GM12878 (cell line): ENCODE measurements at regions of chr9 and their contacts with region 1.

Region 1: GRCh38 chr9:2181792-2182191 is 166.6 kb downstream of the SMARCA2 start:
- DNase-seq: no peak
- ATAC-seq: peak; percentile 51
- H3K4me3 ChIP-seq: no peak overlapping the region
- H3K27ac ChIP-seq: no peak overlapping the region
- H3K4me1 ChIP-seq: no peaks in the 10 kb centered on the region
- H3K27me3 ChIP-seq: no peaks in the 10 kb centered on the region
- CTCF ChIP-seq: peak; percentile 45 to 49 (median 48); a peak in 5 of 6 replicates
- EP300 ChIP-seq: no peak
- POLR2A ChIP-seq: no peak
- RAD21 ChIP-seq: peak; percentile 48

Region 2: GRCh38 chr9:1882711-1883403 is 298.9 kb before region 1 on chr9:
- CTCF ChIA-PET with region 1: no interaction called
- POLR2A ChIA-PET with region 1: no interaction called
- RAD21 ChIA-PET with region 1: no interaction called
- SMC1A ChIA-PET with region 1: no interaction called
- in situ Hi-C with region 1: no loop called
- intact Hi-C with region 1: no loop called
- DNase-seq: no peak
- ATAC-seq: no peak
- H3K4me3 ChIP-seq: no peak overlapping the region
- H3K27ac ChIP-seq: no peak overlapping the region
- H3K4me1 ChIP-seq: peaks cover 27% of the 10 kb centered on the region
- H3K27me3 ChIP-seq: no peaks in the 10 kb centered on the region
- CTCF ChIP-seq: no peak
- EP300 ChIP-seq: no peak
- POLR2A ChIP-seq: no peak
- RAD21 ChIP-seq: no peak

Region 3: DNA sequence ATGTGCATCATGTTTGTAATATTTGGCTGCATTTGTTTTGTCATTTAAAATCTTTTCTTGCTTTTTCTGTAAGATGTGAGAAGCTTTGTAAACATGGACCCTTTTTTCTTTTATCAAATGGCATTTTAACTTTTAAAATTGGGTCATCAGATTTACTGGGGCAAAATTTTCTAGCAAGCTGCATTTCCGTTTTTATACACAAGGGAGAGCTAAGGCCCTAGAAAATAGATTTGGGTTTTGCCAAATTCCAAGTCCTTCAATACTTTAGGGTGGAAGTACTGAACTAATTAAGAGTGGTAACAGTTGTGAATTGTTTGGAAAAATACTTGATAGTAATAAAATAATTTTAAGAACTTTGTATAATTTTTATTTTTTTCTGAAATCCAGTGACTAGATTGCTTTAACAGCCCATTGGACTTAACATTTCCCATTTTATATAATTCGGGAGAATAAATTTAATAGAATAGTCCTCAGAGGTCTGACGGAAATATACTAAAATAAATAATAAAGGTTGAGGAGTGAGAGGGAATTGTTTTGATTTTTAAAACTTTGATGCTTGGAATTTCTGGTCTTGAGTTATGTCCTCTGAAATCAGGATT is 49.2 kb before region 1 on chr9:
- CTCF ChIA-PET with region 1: interaction called, 61 read pairs
- POLR2A ChIA-PET with region 1: no interaction called
- RAD21 ChIA-PET with region 1: interaction called, 23 read pairs
- SMC1A ChIA-PET with region 1: interaction called, 13 read pairs
- in situ Hi-C with region 1: no loop called
- intact Hi-C with region 1: loop called (anchors 2 kb)
- DNase-seq: no peak
- ATAC-seq: peak; percentile 25; the same call in 1 of the 3 replicates
- H3K4me3 ChIP-seq: no peak overlapping the region
- H3K27ac ChIP-seq: no peak overlapping the region
- H3K4me1 ChIP-seq: no peaks in the 10 kb centered on the region
- H3K27me3 ChIP-seq: no peaks in the 10 kb centered on the region
- CTCF ChIP-seq: peak; percentile 51 to 58 (median 53)
- EP300 ChIP-seq: no peak
- POLR2A ChIP-seq: no peak
- RAD21 ChIP-seq: peak; percentile 69

Region 4: DNA sequence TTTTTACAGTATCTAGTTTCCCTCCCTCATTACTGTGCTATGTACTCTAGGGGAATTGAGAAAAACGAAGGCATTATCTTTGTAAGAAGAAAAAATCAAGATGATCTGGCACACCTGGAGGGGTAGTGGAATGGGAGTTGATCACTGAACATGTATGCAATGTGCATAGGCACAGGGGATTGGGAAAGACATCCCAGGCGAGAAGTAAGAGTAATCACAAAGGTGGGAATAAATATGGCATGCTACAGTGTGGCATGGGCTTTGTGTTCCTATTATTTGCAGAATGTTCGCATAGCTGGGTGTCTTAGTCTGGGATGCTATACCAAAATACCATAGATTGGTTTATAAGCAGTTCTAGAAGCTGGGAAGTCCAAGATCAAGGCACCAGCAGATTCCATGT is 36.0 kb before region 1 on chr9:
- CTCF ChIA-PET with region 1: interaction called, 15 read pairs
- POLR2A ChIA-PET with region 1: no interaction called
- RAD21 ChIA-PET with region 1: interaction called, 5 read pairs
- SMC1A ChIA-PET with region 1: interaction called, 6 read pairs
- in situ Hi-C with region 1: no loop called
- intact Hi-C with region 1: no loop called
- DNase-seq: no peak
- ATAC-seq: no peak
- H3K4me3 ChIP-seq: no peak overlapping the region
- H3K27ac ChIP-seq: no peak overlapping the region
- H3K4me1 ChIP-seq: peaks cover 3% of the 10 kb centered on the region
- H3K27me3 ChIP-seq: no peaks in the 10 kb centered on the region
- CTCF ChIP-seq: no peak
- EP300 ChIP-seq: no peak
- POLR2A ChIP-seq: no peak
- RAD21 ChIP-seq: no peak

Region 5: DNA sequence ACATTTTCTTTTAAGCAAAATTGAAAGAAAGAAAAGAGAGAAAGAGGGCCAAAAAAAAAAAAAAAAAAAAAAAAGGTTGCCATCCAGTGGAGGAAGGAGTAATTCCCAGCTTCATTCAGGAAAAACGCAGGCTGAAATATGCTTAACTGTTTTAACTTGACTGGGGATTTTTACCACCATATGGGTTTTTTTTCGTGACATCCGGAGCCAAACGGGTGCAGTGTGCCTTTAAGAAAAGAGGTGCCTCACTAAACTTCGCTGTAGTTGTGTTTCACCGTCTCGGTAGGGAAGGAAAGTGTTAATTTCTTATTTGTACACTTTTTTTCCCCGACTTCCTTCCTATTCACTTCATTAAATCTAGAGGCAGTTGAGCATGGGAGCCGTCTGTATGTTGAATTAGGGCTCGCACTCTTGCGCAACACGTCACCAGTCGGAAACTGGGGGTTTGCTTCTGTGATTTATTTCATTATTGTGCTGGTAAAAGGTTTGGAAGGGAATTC is 23.6 kb before region 1 on chr9:
- CTCF ChIA-PET with region 1: interaction called, 11 read pairs
- POLR2A ChIA-PET with region 1: no interaction called
- RAD21 ChIA-PET with region 1: interaction called, 4 read pairs
- SMC1A ChIA-PET with region 1: interaction called, 4 read pairs
- in situ Hi-C with region 1: no loop called
- intact Hi-C with region 1: no loop called
- DNase-seq: peak; percentile 39
- ATAC-seq: peak; percentile 78
- H3K4me3 ChIP-seq: peak overlapping the region; percentile 79
- H3K27ac ChIP-seq: peak overlapping the region; percentile 75
- H3K4me1 ChIP-seq: peaks cover 8% of the 10 kb centered on the region; the same call in 1 of the 2 replicates
- H3K27me3 ChIP-seq: no peaks in the 10 kb centered on the region
- CTCF ChIP-seq: no peak
- EP300 ChIP-seq: 0 out of 4 replicates have a peak, but pooled peaks of 1 of the 2 experiments have one; percentile 10
- POLR2A ChIP-seq: no peak
- RAD21 ChIP-seq: no peak